ENCODE measurements at regions of chr2 and their contacts with region 1.

Region 1: GRCh38 chr2:219521066-219521880 is 7.0 kb downstream of the ASIC4 start:
- DNase-seq: peak; percentile 66
- H3K4me3 Mint-ChIP-seq: no peak overlapping the region
- H3K27ac Mint-ChIP-seq: no peak overlapping the region
- H3K4me1 Mint-ChIP-seq: peaks cover 14% of the 10 kb centered on the region
- H3K27me3 Mint-ChIP-seq: peaks cover 77% of the 10 kb centered on the region
- CTCF ChIP-seq: peak; percentile 91

Region 2: GRCh38 chr2:219475697-219476651 is 45.3 kb before region 1 on chr2:
- CTCF ChIA-PET with region 1: interaction called, 3 read pairs
- intact Hi-C with region 1: loop called (anchors 5 kb)
- DNase-seq: peak; percentile 89
- H3K4me3 Mint-ChIP-seq: peak overlapping the region; percentile 39
- H3K27ac Mint-ChIP-seq: no peak overlapping the region
- H3K4me1 Mint-ChIP-seq: peaks cover 24% of the 10 kb centered on the region
- H3K27me3 Mint-ChIP-seq: peaks cover 5% of the 10 kb centered on the region
- CTCF ChIP-seq: peak; percentile 87

Region 3: GRCh38 chr2:219509780-219510511 is 11.3 kb before region 1 on chr2:
- CTCF ChIA-PET with region 1: interaction called, 20 read pairs
- intact Hi-C with region 1: no loop called
- DNase-seq: peak; percentile 79
- H3K4me3 Mint-ChIP-seq: peak overlapping the region; percentile 79
- H3K27ac Mint-ChIP-seq: peak overlapping the region; percentile 72
- H3K4me1 Mint-ChIP-seq: peaks cover 29% of the 10 kb centered on the region
- H3K27me3 Mint-ChIP-seq: peaks cover 59% of the 10 kb centered on the region
- CTCF ChIP-seq: peak; percentile 72

Measured in Calu3 (cell line).